Activated naive CD8-positive, alpha-beta T cell treated with anti-CD3 and anti-CD28 coated beads, Interleukin-2, amount 10 ng/mL, durations not matched to agents 7 days and 5 days (primary cell): ENCODE measurements at regions of chr14 and their contacts with region 1.

Region 1: DNA sequence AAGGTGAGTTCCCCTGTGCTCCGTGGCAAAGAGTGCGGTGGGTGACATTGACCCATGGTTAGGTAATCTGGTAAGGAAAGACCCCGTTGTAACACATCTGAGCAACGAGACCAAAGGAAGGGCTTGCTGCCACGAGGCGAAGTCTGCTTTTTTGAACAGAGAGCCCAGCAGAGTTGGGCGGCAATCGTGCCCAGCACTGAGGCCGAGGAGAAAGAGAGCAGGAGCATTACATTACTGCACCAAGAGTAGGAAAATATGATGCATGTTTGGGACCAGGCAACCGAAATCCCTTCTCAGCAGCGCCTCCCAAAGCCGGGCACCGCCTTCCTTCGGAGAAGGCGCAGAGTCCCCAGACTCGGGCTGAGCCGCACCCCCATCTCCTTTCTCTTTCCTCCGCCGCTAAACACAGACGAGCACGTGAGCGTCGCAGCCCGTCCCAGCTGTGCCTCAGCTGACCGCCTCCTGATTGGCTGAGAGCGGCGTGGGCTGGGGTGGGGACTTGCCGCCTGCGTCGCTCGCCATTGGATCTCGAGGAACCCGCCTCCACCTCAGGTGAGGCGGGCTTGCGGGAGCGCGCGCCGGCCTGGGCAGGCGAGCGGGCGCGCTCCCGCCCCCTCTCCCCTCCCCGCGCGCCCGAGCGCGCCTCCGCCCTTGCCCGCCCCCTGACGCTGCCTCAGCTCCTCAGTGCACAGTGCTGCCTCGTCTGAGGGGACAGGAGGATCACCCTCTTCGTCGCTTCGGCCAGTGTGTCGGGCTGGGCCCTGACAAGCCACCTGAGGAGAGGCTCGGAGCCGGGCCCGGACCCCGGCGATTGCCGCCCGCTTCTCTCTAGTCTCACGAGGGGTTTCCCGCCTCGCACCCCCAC is at the start of gene HIF1A:
- DNase-seq: peak; percentile 93
- ATAC-seq: peak; percentile 92
- H3K4me3 Mint-ChIP-seq: peak within 1 kb of the TSS; percentile 97
- H3K27ac Mint-ChIP-seq: peak within 1 kb of the TSS; percentile 96
- H3K4me1 Mint-ChIP-seq: peaks cover 37% of the 10 kb centered on the region
- H3K27me3 Mint-ChIP-seq: no peaks in the 10 kb centered on the region
- total RNA-seq, gene HIF1A: 119 to 128 TPM

Region 2: GRCh38 chr14:61475316-61475715 is 219.7 kb before region 1 on chr14:
- POLR2A ChIA-PET with region 1: interaction called, 30 read pairs
- DNase-seq: no peak
- ATAC-seq: no peak
- H3K4me3 Mint-ChIP-seq: peak overlapping the region; percentile 37
- H3K27ac Mint-ChIP-seq: peak overlapping the region; percentile 70
- H3K4me1 Mint-ChIP-seq: peaks cover 90% of the 10 kb centered on the region
- H3K27me3 Mint-ChIP-seq: no peaks in the 10 kb centered on the region

Region 3: DNA sequence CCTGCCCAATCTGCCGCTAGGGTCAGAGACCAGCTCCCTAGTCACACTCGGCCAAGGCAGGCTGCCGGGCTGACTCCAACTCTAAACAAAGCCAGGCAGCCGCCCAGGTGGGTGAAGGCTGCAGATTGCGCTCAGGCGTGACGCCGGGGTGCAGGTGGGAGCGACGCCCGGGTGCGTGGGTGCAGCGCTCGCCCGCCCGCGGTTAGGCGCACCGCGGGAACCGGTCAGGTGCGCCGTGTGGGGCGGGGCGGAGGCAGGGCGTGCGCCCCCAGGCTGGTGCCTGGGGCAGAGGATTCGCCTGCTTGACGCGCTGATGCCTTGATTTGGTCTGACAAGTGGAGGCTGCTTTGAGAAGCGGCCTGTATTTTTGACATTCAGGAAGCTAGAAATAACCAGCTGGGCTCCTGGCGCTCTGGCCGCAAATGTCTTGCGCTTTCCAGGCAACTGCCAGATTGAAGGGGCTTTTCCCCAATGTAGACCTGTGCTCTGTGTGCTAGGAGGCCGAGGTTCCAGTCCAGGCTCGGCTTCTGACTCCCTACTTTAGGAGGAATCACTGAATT is 126.4 kb before region 1 on chr14:
- POLR2A ChIA-PET with region 1: interaction called, 22 read pairs
- DNase-seq: peak; percentile 80
- ATAC-seq: peak; percentile 73
- H3K4me3 Mint-ChIP-seq: peak overlapping the region; percentile 79
- H3K27ac Mint-ChIP-seq: peak overlapping the region; percentile 87
- H3K4me1 Mint-ChIP-seq: peaks cover 45% of the 10 kb centered on the region
- H3K27me3 Mint-ChIP-seq: peaks cover 1% of the 10 kb centered on the region

Region 4: DNA sequence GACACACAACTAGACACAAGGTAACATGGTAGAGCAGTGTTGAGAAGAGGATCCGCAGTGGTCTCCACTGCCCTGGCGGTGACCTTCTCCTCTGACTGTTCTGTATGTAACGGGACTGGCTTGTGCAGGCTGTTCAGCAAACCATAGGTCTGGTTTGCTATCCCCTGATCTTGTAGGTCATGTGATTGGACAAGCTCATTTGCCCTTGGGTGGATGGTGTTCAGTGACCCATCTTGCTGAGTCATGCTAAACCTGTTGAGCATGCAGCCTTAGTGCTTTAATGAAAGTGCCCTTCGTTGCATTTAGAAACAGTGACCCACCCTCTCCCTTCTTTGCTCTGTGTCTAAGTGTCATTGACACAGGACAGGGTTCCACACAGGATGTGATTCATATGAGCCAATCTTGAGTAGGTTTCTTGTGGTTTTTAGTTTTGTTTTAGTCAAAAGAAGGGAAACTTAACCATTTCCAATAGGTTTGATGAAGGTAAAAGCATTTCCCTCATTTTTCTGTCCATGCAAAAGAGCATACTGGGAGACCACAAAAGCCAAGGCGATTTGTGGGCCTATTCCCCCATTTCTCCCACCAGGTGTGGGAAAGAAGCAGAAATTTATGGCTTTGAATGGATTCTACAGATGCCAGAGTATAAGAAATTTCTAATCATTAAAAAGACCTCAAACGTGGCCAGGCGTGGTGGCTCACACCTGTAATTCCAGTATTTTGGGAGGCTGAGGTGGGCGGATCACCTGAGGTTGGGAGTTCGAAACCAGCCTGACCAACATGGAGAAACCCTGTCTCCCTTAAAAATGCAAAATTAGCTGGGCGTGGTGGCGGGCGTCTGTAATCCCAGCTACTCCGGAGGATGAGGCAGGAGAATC is 32.4 kb before region 1 on chr14:
- POLR2A ChIA-PET with region 1: interaction called, 49 read pairs
- DNase-seq: peak; percentile 61
- ATAC-seq: peak; percentile 87
- H3K4me3 Mint-ChIP-seq: peak overlapping the region; percentile 72
- H3K27ac Mint-ChIP-seq: peak overlapping the region; percentile 95
- H3K4me1 Mint-ChIP-seq: peaks cover 55% of the 10 kb centered on the region
- H3K27me3 Mint-ChIP-seq: no peaks in the 10 kb centered on the region

Region 5: GRCh38 chr14:61671082-61671481 is 24.0 kb before region 1 on chr14:
- POLR2A ChIA-PET with region 1: interaction called, 20 read pairs
- DNase-seq: no peak
- ATAC-seq: peak; percentile 69
- H3K4me3 Mint-ChIP-seq: no peak overlapping the region
- H3K27ac Mint-ChIP-seq: no peak overlapping the region
- H3K4me1 Mint-ChIP-seq: peaks cover 9% of the 10 kb centered on the region
- H3K27me3 Mint-ChIP-seq: no peaks in the 10 kb centered on the region

Region 6: GRCh38 chr14:61719344-61720293 is 24.6 kb after region 1 on chr14:
- POLR2A ChIA-PET with region 1: interaction called, 18 read pairs
- DNase-seq: no peak
- ATAC-seq: peak; percentile 70
- H3K4me3 Mint-ChIP-seq: peak overlapping the region; percentile 58
- H3K27ac Mint-ChIP-seq: peak overlapping the region; percentile 76
- H3K4me1 Mint-ChIP-seq: peaks cover 54% of the 10 kb centered on the region
- H3K27me3 Mint-ChIP-seq: no peaks in the 10 kb centered on the region

Region 7: DNA sequence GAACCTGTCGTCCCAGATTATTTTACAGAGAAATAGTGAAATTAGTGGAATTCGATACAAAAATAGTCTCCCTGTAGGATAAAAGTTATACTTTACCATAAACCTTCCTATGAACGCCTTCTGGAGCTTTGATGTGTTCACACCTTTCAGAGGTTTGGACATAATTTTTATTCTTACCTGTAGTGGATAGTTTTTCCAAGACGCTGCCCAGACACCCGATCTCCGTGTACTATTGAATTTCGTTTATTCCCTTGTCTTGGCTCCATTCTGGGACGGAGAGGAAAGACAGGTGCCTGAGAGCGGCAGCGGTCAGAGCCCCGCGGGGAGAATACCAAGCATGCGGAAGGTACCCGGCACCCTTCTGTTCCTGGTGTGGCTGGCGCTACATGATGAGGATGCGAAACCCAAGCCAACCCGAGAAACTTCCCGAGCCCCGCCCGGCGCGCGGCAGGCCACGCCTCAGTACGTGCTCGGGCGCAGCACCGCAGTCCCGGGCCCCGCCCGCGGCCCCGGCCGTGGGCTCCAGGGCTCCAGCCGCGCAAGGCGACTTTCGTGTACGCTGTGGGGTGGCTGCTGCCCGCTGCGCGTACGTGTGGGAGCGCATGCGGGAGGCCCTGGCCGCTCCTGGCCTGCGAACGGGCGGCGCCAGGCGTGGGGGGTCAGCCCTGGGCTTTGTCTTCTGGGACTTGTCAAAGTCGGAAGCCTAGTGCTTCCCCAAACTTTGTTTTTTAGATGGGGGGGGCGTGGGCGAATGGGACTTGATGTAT is 55.8 kb after region 1 on chr14:
- POLR2A ChIA-PET with region 1: interaction called, 13 read pairs
- DNase-seq: peak; percentile 88
- ATAC-seq: peak; percentile 97
- H3K4me3 Mint-ChIP-seq: peak overlapping the region; percentile 99
- H3K27ac Mint-ChIP-seq: peak overlapping the region; percentile 91
- H3K4me1 Mint-ChIP-seq: peaks cover 44% of the 10 kb centered on the region
- H3K27me3 Mint-ChIP-seq: peaks cover 9% of the 10 kb centered on the region